ENCODE measurements at regions of chr19 and their contacts with region 1.

Region 1: DNA sequence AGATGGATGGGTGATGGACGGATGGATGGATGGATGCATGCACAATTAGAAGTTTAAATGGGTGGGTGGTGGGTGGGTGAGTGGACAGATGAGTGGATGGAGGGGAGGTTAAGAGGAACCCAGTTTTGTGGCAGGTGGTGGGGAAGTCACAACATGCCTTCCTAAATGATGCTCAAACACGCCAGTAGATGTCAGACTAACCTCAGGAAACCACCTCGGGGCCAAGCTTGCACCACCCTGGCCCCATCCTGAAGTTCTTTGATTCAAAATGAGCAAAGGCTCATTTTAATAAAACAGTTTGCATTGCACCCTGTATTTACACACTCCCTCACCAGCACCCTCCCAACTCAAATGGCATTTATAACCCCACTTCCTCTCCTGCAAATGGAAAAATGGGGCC is 91.4 kb upstream of the CACNA1A start:
- DNase-seq: peak; percentile 47 to 60
- H3K4me3 ChIP-seq: no peak overlapping the region
- H3K4me3 Mint-ChIP-seq: no peak overlapping the region
- H3K27ac Mint-ChIP-seq: no peak overlapping the region
- H3K4me1 ChIP-seq: no peaks in the 10 kb centered on the region
- H3K4me1 Mint-ChIP-seq: no peaks in the 10 kb centered on the region
- H3K27me3 ChIP-seq: no peaks in the 10 kb centered on the region
- H3K27me3 Mint-ChIP-seq: no peaks in the 10 kb centered on the region
- CTCF ChIP-seq: peak; percentile 54 to 67

Region 2: DNA sequence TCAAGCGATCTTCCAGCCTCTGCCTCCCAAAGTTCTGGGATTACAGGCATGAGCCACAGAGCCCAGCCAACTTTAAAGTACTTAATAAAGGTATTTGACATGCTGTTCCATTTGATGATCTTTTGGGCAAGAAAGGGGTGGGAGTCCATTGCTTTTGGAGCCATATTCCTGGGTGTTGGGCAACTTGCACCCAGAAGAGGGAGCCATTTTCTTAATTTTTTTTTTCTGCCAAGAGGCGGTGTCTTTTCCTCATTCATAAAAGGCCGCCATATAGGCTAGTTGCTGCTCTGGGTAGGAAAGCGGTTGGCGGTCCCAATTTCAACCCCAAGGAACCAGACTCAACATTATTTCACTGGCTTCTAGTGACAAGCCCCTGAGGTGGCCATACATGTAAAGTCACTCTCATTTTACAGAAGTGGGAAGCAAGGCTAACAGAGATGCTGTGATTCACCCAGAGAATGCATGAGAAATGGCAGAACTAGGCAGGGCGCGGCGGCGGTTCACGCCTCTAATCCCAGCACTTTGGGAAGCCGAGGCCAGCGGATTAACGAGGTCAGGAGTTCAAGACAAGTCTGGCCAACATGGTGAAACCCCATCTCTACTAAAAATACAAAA is 231.0 kb before region 1 on chr19:
- CTCF ChIA-PET with region 1: no interaction called
- POLR2A ChIA-PET with region 1: no interaction called
- intact Hi-C with region 1: loop called (anchors 10 kb)
- DNase-seq: peak in 1 of 2 experiments; percentile 14
- H3K4me3 ChIP-seq: no peak overlapping the region
- H3K4me3 Mint-ChIP-seq: no peak overlapping the region
- H3K27ac Mint-ChIP-seq: no peak overlapping the region
- H3K4me1 ChIP-seq: no peaks in the 10 kb centered on the region
- H3K4me1 Mint-ChIP-seq: no peaks in the 10 kb centered on the region
- H3K27me3 ChIP-seq: no peaks in the 10 kb centered on the region
- H3K27me3 Mint-ChIP-seq: peaks cover 8% of the 10 kb centered on the region
- CTCF ChIP-seq: peak; percentile 34 to 42

Region 3: GRCh38 chr19:13610039-13610691 is 12.5 kb after region 1 on chr19:
- CTCF ChIA-PET with region 1: no interaction called
- POLR2A ChIA-PET with region 1: no interaction called
- intact Hi-C with region 1: no loop called
- DNase-seq: peak in 1 of 2 experiments; percentile 9
- H3K4me3 ChIP-seq: no peak overlapping the region
- H3K4me3 Mint-ChIP-seq: no peak overlapping the region
- H3K27ac Mint-ChIP-seq: no peak overlapping the region
- H3K4me1 ChIP-seq: no peaks in the 10 kb centered on the region
- H3K4me1 Mint-ChIP-seq: no peaks in the 10 kb centered on the region
- H3K27me3 ChIP-seq: no peaks in the 10 kb centered on the region
- H3K27me3 Mint-ChIP-seq: peaks cover 7% of the 10 kb centered on the region
- CTCF ChIP-seq: no peak

Region 4: GRCh38 chr19:13718733-13719132 is 121.1 kb after region 1 on chr19:
- CTCF ChIA-PET with region 1: interaction called, 4 read pairs
- POLR2A ChIA-PET with region 1: no interaction called
- intact Hi-C with region 1: loop called (anchors 1 kb)
- DNase-seq: peak in 1 of 2 experiments; percentile 12
- H3K4me3 ChIP-seq: no peak overlapping the region
- H3K4me3 Mint-ChIP-seq: no peak overlapping the region
- H3K27ac Mint-ChIP-seq: no peak overlapping the region
- H3K4me1 ChIP-seq: no peaks in the 10 kb centered on the region
- H3K4me1 Mint-ChIP-seq: no peaks in the 10 kb centered on the region
- H3K27me3 ChIP-seq: no peaks in the 10 kb centered on the region
- H3K27me3 Mint-ChIP-seq: peaks cover 5% of the 10 kb centered on the region
- CTCF ChIP-seq: peak in 1 of 2 experiments; percentile 14